Panc1 (cell line): ENCODE measurements at regions of chr22 and their contacts with region 1.

Region 1: GRCh38 chr22:27747396-27748201 is 54.0 kb downstream of the MN1 start:
- DNase-seq: no peak
- ATAC-seq: no peak
- H3K4me3 ChIP-seq: no peak overlapping the region
- H3K27ac ChIP-seq: no peak overlapping the region
- H3K4me1 ChIP-seq: no peaks in the 10 kb centered on the region; the same call in 1 of the 2 replicates
- H3K27me3 ChIP-seq: no peaks in the 10 kb centered on the region; the same call in 1 of the 2 replicates
- CTCF ChIP-seq: no peak; the same call in 1 of the 2 replicates

Region 2: GRCh38 chr22:27467711-27468110 is 279.9 kb before region 1 on chr22:
- CTCF ChIA-PET with region 1: no interaction called
- POLR2A ChIA-PET with region 1: no interaction called
- in situ Hi-C with region 1: no loop called
- intact Hi-C with region 1: no loop called
- DNase-seq: no peak
- ATAC-seq: no peak
- H3K4me3 ChIP-seq: no peak overlapping the region
- H3K27ac ChIP-seq: no peak overlapping the region
- H3K4me1 ChIP-seq: no peaks in the 10 kb centered on the region
- H3K27me3 ChIP-seq: no peaks in the 10 kb centered on the region
- CTCF ChIP-seq: no peak

Region 3: GRCh38 chr22:27692243-27692642 is 55.4 kb before region 1 on chr22:
- CTCF ChIA-PET with region 1: interaction called, 13 read pairs
- POLR2A ChIA-PET with region 1: no interaction called
- in situ Hi-C with region 1: no loop called
- intact Hi-C with region 1: no loop called
- DNase-seq: no peak
- ATAC-seq: no peak
- H3K4me3 ChIP-seq: no peak overlapping the region
- H3K27ac ChIP-seq: no peak overlapping the region
- H3K4me1 ChIP-seq: no peaks in the 10 kb centered on the region
- H3K27me3 ChIP-seq: no peaks in the 10 kb centered on the region; the same call in 1 of the 2 replicates
- CTCF ChIP-seq: no peak